ENCODE measurements at regions of chr1 and their contacts with region 1.

Region 1: DNA sequence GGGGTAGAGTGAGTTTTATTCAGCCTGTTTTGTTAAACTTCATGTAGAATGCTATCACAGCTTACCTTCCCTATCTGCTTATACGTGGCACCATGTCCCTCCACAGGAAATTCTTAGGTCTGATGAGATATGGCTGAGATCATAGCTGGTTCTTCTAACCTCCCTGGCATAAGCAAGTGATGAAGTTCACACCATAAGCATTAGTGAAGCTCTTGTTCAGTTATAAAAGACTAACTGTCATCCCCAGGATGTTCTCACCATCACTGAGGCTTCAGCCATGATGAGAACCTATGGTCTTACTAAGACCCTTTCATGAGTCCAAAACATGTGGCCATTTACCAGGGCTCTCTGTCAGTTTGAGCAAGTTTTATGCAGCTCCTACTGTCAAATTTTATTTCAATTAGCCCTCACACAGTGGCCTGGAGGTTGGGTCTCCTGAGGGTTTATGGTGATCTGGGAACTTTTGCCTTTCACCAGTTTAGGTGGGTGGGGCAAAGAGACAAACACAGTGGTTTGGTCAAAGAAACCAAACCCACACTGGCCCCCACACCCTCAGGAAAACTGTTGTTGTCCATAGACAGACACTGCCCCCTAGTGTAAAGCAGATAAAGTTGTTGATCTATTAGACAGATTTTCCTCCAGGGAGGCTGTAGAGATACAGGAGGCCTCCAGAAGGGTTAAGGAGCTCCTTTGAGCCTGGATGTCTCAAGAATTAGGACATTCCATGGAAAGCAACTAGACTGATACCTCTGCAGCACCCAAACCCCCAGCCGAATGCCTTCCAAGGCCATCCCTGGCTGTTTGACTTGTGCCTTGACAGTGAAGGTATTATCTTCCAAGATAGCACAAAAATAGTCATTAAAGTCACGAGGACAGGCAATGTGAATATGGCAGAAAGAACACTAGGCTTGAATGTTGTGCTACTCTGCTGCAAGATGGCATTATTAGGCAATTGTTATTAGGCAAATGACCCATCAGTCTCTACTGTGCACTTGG is 5.0 kb downstream of the SLC22A15 start:
- DNase-seq: peak; percentile 67
- CTCF ChIP-seq: peak; percentile 68

Region 2: GRCh38 chr1:115595279-115596079 is 385.8 kb before region 1 on chr1:
- in situ Hi-C with region 1: no loop called
- DNase-seq: peak; percentile 56
- CTCF ChIP-seq: peak; percentile 97

Region 3: DNA sequence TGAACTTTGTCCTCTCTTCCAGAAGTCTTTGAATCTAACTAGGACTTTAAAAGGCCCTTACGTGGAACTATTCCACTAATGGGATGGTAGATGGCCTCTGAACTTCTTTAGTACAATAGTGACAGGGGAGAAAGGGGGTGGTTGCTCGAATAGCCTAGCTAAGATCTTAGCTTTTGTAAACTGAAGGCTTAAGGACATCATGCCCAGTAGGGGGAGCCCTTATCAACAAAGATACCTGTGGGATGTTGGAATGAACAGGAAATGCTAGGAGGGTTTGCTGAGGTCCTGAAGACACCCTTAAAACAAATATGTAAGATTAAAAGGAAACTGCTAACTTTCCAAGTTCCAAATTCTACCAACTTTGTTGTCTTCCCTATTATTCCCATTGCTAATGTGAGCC is 173.6 kb before region 1 on chr1:
- in situ Hi-C with region 1: loop called (anchors 10 kb)
- DNase-seq: no peak
- CTCF ChIP-seq: peak; percentile 71

Region 4: DNA sequence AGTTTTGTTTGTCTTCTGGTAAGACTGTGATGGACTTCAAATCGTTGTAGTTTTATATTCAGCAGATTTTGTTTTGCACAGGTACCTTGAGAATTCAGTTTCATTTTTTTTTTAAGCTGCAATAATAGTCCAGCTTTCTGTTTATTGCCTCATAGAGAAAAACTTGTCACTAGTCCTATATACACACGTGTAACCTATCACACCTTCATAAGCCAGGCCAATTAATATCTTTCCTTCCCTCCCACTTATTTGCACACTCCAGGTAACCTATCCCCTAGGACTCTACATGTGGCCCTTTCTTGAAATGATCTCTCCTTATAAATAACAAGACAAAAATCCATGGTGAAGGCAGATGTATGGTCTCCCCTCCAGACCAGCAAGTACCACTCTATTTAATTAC is 57.4 kb after region 1 on chr1:
- in situ Hi-C with region 1: no loop called
- DNase-seq: no peak
- CTCF ChIP-seq: no peak

Region 5: GRCh38 chr1:117599286-117600221 is 1618.3 kb after region 1 on chr1:
- in situ Hi-C with region 1: no loop called
- DNase-seq: no peak
- CTCF ChIP-seq: no peak